Vagina (tissue), 2 donors: ENCODE measurements at regions of chr5 and their contacts with region 1.

Region 1: DNA sequence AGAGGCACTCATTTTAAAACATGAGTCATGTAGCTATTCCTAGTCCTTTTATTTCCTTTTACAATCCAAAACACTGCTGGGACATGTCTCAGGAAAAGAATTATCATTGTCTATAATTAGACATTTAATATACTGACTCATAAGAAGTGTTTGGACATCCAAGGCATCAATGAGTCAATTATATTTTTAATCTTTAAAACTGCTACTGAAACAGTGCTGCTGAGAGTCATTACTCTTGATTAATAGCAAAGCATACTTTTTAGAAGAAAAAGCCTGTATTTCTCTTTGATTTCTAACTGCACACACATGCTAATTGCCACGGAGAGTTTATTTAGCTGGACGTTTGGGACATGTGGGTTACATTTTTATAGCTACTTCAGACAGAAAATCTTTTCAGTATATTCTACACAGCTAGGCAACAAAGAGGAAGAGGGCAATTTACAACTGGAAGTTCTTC is 1249.0 kb upstream of the CDH18 start:
- DNase-seq: no peak
- H3K4me3 ChIP-seq: no peak overlapping the region
- H3K27ac ChIP-seq: no peak overlapping the region
- H3K4me1 ChIP-seq: no peaks in the 10 kb centered on the region
- H3K27me3 ChIP-seq: no peaks in the 10 kb centered on the region
- CTCF ChIP-seq: no peak
- POLR2A ChIP-seq: no peak

Region 2: GRCh38 chr5:21191753-21192152 is 45.2 kb before region 1 on chr5:
- intact Hi-C with region 1: no loop called
- DNase-seq: no peak
- H3K4me3 ChIP-seq: no peak overlapping the region
- H3K27ac ChIP-seq: no peak overlapping the region
- H3K4me1 ChIP-seq: no peaks in the 10 kb centered on the region
- H3K27me3 ChIP-seq: no peaks in the 10 kb centered on the region
- CTCF ChIP-seq: no peak
- POLR2A ChIP-seq: no peak

Region 3: GRCh38 chr5:21254161-21254560 is 17.2 kb after region 1 on chr5:
- intact Hi-C with region 1: loop called (anchors 1 kb)
- DNase-seq: no peak
- H3K4me3 ChIP-seq: no peak overlapping the region
- H3K27ac ChIP-seq: no peak overlapping the region
- H3K4me1 ChIP-seq: no peaks in the 10 kb centered on the region
- H3K27me3 ChIP-seq: no peaks in the 10 kb centered on the region
- CTCF ChIP-seq: no peak
- POLR2A ChIP-seq: no peak